ENCODE measurements at regions of chr18 and their contacts with region 1.

Region 1: GRCh38 chr18:24937639-24938275 is 414.2 kb downstream of the ZNF521 start:
- DNase-seq: no peak
- ATAC-seq: no peak
- H3K4me3 ChIP-seq: no peak overlapping the region
- H3K27ac ChIP-seq: no peak overlapping the region
- H3K4me1 ChIP-seq: no peaks in the 10 kb centered on the region
- H3K27me3 ChIP-seq: no peaks in the 10 kb centered on the region
- CTCF ChIP-seq: no peak
- POLR2A ChIP-seq: no peak

Region 2: DNA sequence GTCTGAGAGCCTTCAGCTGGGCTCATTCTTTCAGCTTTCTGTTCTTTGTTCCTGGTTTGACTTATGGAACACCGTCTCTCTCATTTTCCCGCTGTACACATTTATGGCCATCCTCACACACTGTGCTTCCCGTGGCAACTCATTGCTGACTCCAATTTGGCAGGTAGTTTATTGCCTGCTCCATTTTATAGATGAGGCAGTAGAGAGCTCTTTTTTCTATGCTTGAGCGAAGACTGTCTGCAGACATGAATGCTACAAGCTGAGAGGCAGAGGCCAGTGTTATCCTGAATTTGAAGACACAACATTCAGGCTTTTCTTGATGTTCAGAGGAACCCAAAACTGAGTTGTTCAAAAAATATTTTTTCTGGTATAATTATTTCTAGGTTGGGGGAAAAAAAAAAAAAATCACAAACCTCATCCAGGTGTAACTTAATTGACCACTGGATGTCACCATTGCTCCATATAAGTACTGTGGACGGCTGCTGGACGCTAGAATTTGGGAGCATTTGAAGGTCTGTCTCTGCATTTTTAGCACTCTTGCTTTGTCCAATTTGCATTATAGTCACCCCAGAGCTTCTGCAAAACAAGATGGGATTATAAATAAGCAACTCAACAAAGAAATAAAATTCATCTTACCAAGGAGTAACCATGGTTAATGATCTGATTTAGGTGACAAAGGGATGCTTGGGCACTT is 393.8 kb before region 1 on chr18:
- intact Hi-C with region 1: no loop called
- DNase-seq: no peak
- ATAC-seq: no peak
- H3K4me3 ChIP-seq: no peak overlapping the region
- H3K27ac ChIP-seq: no peak overlapping the region
- H3K4me1 ChIP-seq: no peaks in the 10 kb centered on the region
- H3K27me3 ChIP-seq: peaks cover 0 to under 1% (median 0%) of the 10 kb centered on the region in 9 donors
- CTCF ChIP-seq: peak in 11 of 12 donors; percentile 9 to 50 (median 40)
- POLR2A ChIP-seq: no peak

Region 3: GRCh38 chr18:24734058-24734457 is 203.7 kb before region 1 on chr18:
- intact Hi-C with region 1: no loop called
- DNase-seq: peak in 1 of 5 donors; percentile 29
- ATAC-seq: peak in 2 of 4 donors; percentile 35 to 42
- H3K4me3 ChIP-seq: no peak overlapping the region
- H3K27ac ChIP-seq: no peak overlapping the region
- H3K4me1 ChIP-seq: peaks cover 0 to 9% (median 0%) of the 10 kb centered on the region in 12 donors
- H3K27me3 ChIP-seq: no peaks in the 10 kb centered on the region
- CTCF ChIP-seq: peak in 10 of 12 donors; percentile 12 to 52 (median 28)
- POLR2A ChIP-seq: no peak

Region 4: GRCh38 chr18:24894880-24895279 is 42.9 kb before region 1 on chr18:
- intact Hi-C with region 1: loop called in 1 of 10 experiments (anchors 5 kb)
- DNase-seq: no peak
- ATAC-seq: no peak
- H3K4me3 ChIP-seq: no peak overlapping the region
- H3K27ac ChIP-seq: no peak overlapping the region
- H3K4me1 ChIP-seq: no peaks in the 10 kb centered on the region
- H3K27me3 ChIP-seq: no peaks in the 10 kb centered on the region
- CTCF ChIP-seq: no peak
- POLR2A ChIP-seq: no peak

Region 5: DNA sequence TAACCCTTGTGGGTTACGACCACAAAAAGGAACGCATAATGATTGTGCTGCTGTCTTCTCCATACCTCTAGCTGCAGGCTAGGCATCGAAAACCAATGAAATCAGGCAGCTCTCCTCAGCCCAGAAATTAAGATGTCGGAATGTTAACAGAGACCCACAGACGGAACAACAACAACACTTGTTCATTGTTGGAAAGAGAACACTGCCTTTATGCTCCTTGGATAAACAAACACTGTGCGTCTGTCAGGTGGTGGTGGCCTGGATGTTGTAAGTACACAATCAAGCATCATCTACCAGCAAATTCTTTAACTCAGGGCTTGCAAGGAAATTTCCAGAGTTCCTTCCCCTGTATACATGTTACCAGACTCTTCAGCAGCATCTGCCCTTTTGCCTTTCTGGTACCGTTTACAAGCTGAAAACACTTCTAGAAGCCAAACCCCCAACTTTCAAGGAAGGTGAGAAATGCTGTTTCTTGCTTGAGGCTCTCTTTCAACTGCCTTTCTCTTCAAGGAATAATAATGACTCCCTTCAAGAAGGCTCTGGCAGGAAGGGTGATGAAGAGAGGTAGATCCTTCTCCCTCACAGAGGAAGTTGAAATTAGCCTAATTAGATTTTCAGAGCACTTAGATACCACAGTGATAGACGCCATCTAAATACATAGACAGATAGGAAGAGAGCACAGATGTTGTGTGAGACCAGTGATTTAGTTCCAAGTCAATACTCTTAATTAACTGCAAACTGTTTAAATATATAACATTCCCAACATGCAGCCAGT is 81.5 kb after region 1 on chr18:
- intact Hi-C with region 1: no loop called
- DNase-seq: no peak
- ATAC-seq: no peak
- H3K4me3 ChIP-seq: no peak overlapping the region
- H3K27ac ChIP-seq: no peak overlapping the region
- H3K4me1 ChIP-seq: no peaks in the 10 kb centered on the region
- H3K27me3 ChIP-seq: no peaks in the 10 kb centered on the region
- CTCF ChIP-seq: no peak
- POLR2A ChIP-seq: no peak

Measured in heart left ventricle (tissue), 16 donors.